ENCODE measurements at regions of chr17 and their contacts with region 1.

Region 1: DNA sequence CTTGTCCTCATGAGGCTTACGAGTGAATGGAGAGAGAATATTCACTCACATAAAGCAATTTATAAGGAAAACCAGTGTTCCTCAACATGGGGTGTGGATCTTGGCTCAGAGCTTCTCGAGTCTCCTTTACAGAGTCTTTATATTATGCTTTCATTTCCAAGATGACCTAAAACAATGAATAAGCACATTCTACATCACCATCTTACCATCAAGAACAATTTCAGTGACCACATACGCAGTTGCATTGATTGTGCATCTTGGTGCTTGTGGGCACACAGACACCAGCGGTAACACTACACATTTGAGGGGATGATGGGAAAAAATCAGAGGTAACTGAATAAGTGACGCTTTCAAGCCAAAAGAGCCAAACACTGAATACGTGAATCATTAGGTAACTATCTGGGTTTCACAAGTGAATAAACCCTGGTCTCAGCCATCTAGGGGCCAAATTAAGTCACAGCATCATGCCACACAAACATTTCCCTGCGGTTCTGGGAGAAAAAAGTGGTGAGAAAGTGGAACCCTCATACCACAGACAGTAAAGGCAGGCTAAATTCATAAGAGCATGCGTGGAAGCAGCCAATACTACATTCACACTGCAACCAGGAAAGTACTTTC is 9.4 kb downstream of the CWC25 start:
- DNase-seq: no peak

Region 2: DNA sequence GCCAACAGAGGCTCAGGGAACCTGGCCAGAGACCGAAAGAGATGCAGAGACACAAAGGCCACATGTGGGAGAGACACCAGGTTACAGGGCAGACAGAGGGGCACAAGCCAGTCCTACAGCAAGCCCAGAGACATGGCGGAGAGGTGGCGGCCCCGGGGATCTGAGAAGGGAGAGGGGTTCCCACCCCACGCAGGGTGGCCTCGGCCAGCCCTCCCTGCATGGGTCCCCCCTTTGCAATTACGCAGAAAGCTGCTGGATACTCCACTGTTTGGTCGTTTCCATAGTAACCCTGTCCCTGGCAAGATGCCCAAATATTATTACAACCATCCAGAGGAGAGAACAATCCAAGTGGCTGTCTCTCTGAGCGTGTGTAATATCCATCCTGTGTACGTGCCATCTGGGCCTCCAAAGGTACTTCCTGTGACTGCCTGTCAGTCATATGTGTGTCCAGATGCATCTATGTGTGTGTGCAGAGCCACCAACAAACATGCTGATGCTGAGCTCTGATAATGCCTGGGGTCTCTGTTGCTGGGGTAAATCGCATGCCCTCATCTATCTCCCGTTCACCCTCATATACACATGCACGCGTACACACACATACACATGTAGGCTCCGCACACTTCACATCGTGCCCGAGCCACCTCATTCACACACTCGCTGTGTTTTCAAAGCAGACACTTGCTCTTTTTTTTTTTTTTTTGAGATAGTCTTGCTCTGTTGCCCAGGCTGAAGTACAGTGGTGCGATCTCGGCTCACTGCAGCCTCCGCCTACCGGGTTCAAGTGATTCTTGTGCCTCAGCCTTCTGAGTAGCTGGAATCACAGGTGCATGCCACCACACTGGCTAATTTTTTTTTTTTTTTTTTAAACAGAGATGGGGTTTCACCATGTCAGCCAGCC is 73.0 kb before region 1 on chr17:
- intact Hi-C with region 1: no loop called
- DNase-seq: no peak

Region 3: DNA sequence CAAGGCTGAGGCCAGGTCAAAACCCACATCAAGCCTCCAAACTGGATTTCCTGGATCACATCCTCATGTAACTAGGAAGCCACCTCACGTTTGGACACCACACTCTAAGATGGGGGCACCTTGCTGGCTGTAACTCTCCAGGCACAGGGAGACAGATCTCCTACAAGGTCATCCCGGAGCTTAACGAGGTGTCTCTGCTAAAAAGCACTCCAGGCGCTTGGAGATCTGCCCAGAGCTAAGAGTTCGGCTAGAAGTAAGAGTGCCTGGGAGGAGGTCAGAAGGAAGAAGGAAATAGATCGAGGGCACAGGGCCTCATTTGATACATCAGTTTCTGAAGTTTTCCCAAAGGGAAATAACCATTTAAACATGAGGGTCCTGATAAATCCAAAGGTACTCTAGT is 47.3 kb before region 1 on chr17:
- intact Hi-C with region 1: no loop called
- DNase-seq: no peak

Region 4: GRCh38 chr17:38799378-38800236 is 16.1 kb before region 1 on chr17 and contains the start of gene PIP4K2B:
- intact Hi-C with region 1: loop called in 1 of 2 experiments (anchors 1 kb)
- DNase-seq: peak; percentile 98
- total RNA-seq, gene PIP4K2B: 38.7 to 45.7 TPM

Measured in posterior vena cava (tissue), 2 donors.